Activated CD4-positive, alpha-beta T cell treated with anti-CD3 and anti-CD28 coated beads for 36 hours (primary cell): ENCODE measurements at regions of chr17 and their contacts with region 1.

Region 1: GRCh38 chr17:48024937-48025906 is 12.4 kb downstream of the COPZ2 start:
- DNase-seq: peak; percentile 99
- ATAC-seq: peak; percentile 89
- H3K4me3 Mint-ChIP-seq: peak overlapping the region; percentile 77
- H3K27ac Mint-ChIP-seq: no peak overlapping the region
- H3K4me1 Mint-ChIP-seq: peaks cover 26% of the 10 kb centered on the region
- H3K27me3 Mint-ChIP-seq: peaks cover 25% of the 10 kb centered on the region

Region 2: GRCh38 chr17:47941236-47941994 is 83.8 kb before region 1 on chr17 and contains the start of gene PNPO:
- CTCF ChIA-PET with region 1: no interaction called
- POLR2A ChIA-PET with region 1: no interaction called
- intact Hi-C with region 1: loop called in 1 of 2 experiments (anchors 1 kb)
- DNase-seq: peak; percentile 98
- ATAC-seq: peak; percentile 99
- H3K4me3 Mint-ChIP-seq: peak within 1 kb of the TSS; percentile 95
- H3K27ac Mint-ChIP-seq: peak within 1 kb of the TSS; percentile 91
- H3K4me1 Mint-ChIP-seq: peaks cover 64% of the 10 kb centered on the region
- H3K27me3 Mint-ChIP-seq: no peaks in the 10 kb centered on the region
- total RNA-seq, gene PNPO: 29.7 to 41.0 TPM

Region 3: GRCh38 chr17:48047741-48048383 is 22.6 kb after region 1 on chr17 and contains the start of gene NFE2L1:
- CTCF ChIA-PET with region 1: interaction called, 42 read pairs
- POLR2A ChIA-PET with region 1: interaction called, 6 read pairs
- intact Hi-C with region 1: loop called (anchors 1 kb)
- DNase-seq: peak; percentile 99
- ATAC-seq: peak; percentile 97
- H3K4me3 Mint-ChIP-seq: peak within 1 kb of the TSS; percentile 88
- H3K27ac Mint-ChIP-seq: peak within 1 kb of the TSS; percentile 96
- H3K4me1 Mint-ChIP-seq: peaks cover 45% of the 10 kb centered on the region
- H3K27me3 Mint-ChIP-seq: no peaks in the 10 kb centered on the region
- total RNA-seq, gene NFE2L1: 100 to 127 TPM

Region 4: GRCh38 chr17:48101012-48101720 is 75.9 kb after region 1 on chr17 and contains the start of gene CBX1:
- CTCF ChIA-PET with region 1: interaction called, 10 read pairs
- POLR2A ChIA-PET with region 1: interaction called, 3 read pairs
- intact Hi-C with region 1: loop called in 1 of 2 experiments (anchors 1 kb)
- DNase-seq: peak; percentile 97
- ATAC-seq: peak; percentile 95
- H3K4me3 Mint-ChIP-seq: peak within 1 kb of the TSS; percentile 99
- H3K27ac Mint-ChIP-seq: peak within 1 kb of the TSS; percentile 83
- H3K4me1 Mint-ChIP-seq: peaks cover 41% of the 10 kb centered on the region
- H3K27me3 Mint-ChIP-seq: no peaks in the 10 kb centered on the region
- total RNA-seq, gene CBX1: 58.6 to 66.0 TPM

Region 5: DNA sequence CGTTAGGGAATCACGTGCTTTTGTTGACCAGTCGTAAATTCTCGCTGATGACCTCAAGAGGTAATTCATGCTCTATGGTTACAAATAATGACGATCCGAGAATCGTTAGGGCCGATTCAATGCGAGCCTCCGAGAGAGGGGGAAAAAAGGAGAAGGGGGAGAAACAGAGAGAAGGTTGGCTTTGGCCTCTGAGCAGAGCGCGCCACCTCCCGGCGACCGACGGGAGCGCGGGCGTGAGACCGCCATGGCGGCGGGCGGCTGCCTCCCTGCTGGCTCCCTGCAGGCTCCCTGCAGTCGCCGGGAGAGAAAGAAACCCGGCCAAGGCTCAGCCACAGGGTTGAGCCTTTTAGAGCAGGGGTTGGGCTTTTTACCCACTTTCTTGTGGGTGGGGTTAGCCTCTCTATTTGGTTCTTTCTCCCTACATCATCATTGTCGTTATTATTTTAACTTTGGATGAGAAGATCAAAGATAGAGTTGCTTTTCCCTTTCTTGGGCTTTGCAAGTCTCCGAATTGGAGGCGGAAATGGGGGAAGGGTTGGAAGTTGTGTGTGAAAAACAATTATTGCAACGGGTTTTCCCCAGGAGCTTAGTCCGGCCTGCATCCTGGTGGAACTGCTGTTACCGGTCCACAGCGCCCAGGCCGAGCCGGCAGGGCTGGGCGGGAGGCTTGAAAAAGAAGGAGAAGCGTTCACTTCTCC is 568.8 kb after region 1 on chr17:
- CTCF ChIA-PET with region 1: interaction called, 7 read pairs
- POLR2A ChIA-PET with region 1: no interaction called
- intact Hi-C with region 1: loop called in 1 of 2 experiments (anchors 1 kb)
- DNase-seq: peak; percentile 90
- ATAC-seq: peak; percentile 67
- H3K4me3 Mint-ChIP-seq: peak overlapping the region; percentile 67
- H3K27ac Mint-ChIP-seq: no peak overlapping the region
- H3K4me1 Mint-ChIP-seq: peaks cover 40% of the 10 kb centered on the region
- H3K27me3 Mint-ChIP-seq: peaks cover 80% of the 10 kb centered on the region

Region 6: GRCh38 chr17:48908047-48908843 is 883.0 kb after region 1 on chr17 and contains the start of gene UBE2Z:
- CTCF ChIA-PET with region 1: no interaction called
- POLR2A ChIA-PET with region 1: no interaction called
- intact Hi-C with region 1: loop called in 1 of 2 experiments (anchors 1 kb)
- DNase-seq: peak; percentile 94
- ATAC-seq: peak; percentile 86
- H3K4me3 Mint-ChIP-seq: peak within 1 kb of the TSS; percentile 89
- H3K27ac Mint-ChIP-seq: peak within 1 kb of the TSS; percentile 97
- H3K4me1 Mint-ChIP-seq: peaks cover 46% of the 10 kb centered on the region
- H3K27me3 Mint-ChIP-seq: no peaks in the 10 kb centered on the region
- total RNA-seq, gene UBE2Z: 104 TPM